Activated naive CD4-positive, alpha-beta T cell treated with anti-CD3 and anti-CD28 coated beads for 36 hours (primary cell): ENCODE measurements at regions of chr4 and their contacts with region 1.

Region 1: GRCh38 chr4:183504064-183504929 is 561 bp upstream of the ING2 start:
- DNase-seq: peak; percentile 98
- H3K4me3 Mint-ChIP-seq: peak overlapping the region; percentile 91
- H3K27ac Mint-ChIP-seq: peak overlapping the region; percentile 93
- H3K4me1 Mint-ChIP-seq: peaks cover 39% of the 10 kb centered on the region
- H3K27me3 Mint-ChIP-seq: no peaks in the 10 kb centered on the region

Region 2: DNA sequence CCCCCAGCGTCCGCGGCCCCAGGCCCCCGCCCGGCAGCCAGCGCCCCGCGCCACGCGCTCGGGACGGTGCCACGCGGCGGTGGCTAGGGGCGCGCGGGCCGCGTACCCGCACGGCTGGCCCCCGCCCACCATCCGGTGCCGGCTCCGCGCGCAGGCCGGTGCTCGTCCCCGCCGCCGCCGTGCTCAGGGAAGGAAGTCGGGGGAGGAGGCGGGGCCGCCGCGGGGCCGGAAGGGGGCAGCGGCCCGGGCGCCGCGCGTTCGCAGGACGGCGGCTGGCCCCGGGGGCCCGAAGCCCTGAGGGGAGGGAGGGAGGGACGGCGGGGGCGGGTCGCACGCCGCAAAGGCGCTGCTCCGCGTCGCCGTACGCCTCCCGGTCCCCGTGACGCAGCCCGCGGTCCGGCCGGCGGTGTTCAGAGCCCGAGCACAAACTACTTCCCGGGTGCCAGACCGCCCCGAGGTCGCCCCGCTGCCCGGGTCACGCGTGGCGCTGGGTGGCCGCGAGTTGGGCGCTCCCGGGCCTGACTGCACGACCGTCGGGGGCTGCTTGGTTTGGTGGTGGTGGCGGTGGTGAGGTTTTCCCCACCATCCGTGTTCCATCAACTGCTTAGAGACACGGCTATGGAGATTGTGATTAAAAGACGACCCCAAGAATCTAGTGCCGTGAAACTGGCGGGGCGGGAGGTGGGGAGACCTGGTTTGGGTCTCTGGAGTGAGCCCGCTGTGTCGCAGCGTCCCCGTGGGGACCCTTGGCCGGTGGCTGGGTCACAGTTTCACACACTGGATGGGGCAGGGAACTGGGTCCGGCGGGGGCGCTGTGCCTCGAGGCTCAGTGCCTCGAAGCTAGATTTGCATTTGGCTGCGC is 586.9 kb before region 1 on chr4 and contains the start of gene DCTD:
- CTCF ChIA-PET with region 1: no interaction called
- intact Hi-C with region 1: loop called (anchors 2 kb)
- DNase-seq: peak; percentile 83
- H3K4me3 Mint-ChIP-seq: peak within 1 kb of the TSS; percentile 86
- H3K27ac Mint-ChIP-seq: peak within 1 kb of the TSS; percentile 92
- H3K4me1 Mint-ChIP-seq: peaks cover 53% of the 10 kb centered on the region
- H3K27me3 Mint-ChIP-seq: no peaks in the 10 kb centered on the region
- total RNA-seq, gene DCTD: 137 to 152 TPM

Region 3: DNA sequence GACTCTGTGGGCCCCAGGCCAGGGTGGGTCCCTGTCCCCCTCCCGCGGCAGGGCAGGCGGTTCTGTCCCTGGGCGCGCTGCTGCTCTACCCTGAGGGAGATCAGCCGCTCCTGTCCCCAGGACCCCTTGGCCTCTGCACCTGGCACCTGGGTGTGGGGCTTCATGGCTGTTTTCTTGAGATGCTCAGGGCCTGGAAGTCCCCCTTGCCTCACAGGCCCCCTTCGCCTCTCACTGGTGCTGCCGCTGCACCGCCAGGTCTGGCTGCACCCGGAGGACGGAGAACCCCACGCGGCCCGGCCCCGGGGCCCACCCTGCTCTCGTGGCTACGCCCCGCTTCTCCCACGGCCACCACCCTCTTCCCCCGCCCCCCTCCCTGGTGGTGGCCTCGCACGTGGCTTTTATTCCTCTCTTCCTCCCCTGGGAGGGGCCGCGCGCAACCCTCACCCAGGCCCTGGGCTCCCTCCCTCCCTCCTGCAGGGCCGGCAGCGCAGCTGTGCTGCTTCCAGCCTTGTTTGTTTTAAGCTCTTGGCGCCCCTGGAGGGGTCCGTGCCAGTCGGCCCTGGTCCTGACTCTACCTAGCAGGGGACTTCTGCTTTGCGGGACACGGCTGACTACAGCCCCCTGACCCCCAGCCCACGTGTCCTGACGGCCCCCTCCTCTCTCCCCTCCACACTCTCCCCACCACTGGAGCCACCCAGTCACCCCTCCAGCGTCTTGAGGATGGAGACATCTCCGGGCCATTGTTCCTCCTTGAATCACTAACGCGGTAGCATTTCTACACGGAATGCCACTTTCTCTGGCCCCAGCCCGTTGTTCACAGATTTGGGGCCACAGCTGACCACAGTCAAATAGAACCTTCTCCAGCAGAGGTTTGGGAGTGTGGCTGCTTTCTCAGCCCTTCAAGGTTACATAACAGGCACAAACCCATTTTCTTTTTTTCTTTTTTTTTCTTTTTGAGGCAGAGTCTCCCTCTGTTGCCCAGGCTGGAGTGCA is 161.5 kb before region 1 on chr4:
- CTCF ChIA-PET with region 1: no interaction called
- intact Hi-C with region 1: loop called (anchors 5 kb)
- DNase-seq: peak; percentile 12
- H3K4me3 Mint-ChIP-seq: peak overlapping the region; percentile 42
- H3K27ac Mint-ChIP-seq: no peak overlapping the region
- H3K4me1 Mint-ChIP-seq: peaks cover 5% of the 10 kb centered on the region
- H3K27me3 Mint-ChIP-seq: peaks cover 20% of the 10 kb centered on the region

Region 4: GRCh38 chr4:183471946-183472708 is 32.2 kb before region 1 on chr4:
- CTCF ChIA-PET with region 1: interaction called, 3 read pairs
- intact Hi-C with region 1: loop called (anchors 1 kb)
- DNase-seq: peak; percentile 91
- H3K4me3 Mint-ChIP-seq: no peak overlapping the region
- H3K27ac Mint-ChIP-seq: no peak overlapping the region
- H3K4me1 Mint-ChIP-seq: no peaks in the 10 kb centered on the region
- H3K27me3 Mint-ChIP-seq: no peaks in the 10 kb centered on the region

Region 5: DNA sequence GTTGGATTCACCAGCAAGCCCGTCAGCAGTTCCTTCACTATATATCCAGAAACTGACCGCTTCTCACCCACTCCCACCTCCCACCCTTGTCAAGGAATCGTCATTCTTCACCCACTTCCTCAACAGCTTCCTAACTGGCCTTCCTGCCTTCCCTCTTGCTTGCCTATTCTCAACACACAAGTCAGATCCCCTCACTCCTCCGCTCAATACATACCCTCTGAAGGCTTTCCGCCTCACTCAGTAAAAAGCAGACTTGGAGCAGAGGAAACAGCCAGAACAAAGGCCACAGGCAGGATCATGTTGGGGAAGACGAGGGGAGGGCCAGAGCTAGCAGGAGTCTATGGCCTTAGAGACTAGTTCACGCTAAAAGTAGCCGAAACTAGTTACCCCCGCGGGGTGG is 131.0 kb after region 1 on chr4:
- CTCF ChIA-PET with region 1: no interaction called
- intact Hi-C with region 1: no loop called
- DNase-seq: no peak
- H3K4me3 Mint-ChIP-seq: no peak overlapping the region
- H3K27ac Mint-ChIP-seq: no peak overlapping the region
- H3K4me1 Mint-ChIP-seq: peaks cover 20% of the 10 kb centered on the region
- H3K27me3 Mint-ChIP-seq: peaks cover 2% of the 10 kb centered on the region

Region 6: GRCh38 chr4:183722731-183723560 is 218.6 kb after region 1 on chr4:
- CTCF ChIA-PET with region 1: no interaction called
- intact Hi-C with region 1: loop called (anchors 10 kb)
- DNase-seq: peak; percentile 53
- H3K4me3 Mint-ChIP-seq: peak overlapping the region; percentile 72
- H3K27ac Mint-ChIP-seq: no peak overlapping the region
- H3K4me1 Mint-ChIP-seq: peaks cover 9% of the 10 kb centered on the region
- H3K27me3 Mint-ChIP-seq: peaks cover 12% of the 10 kb centered on the region

Region 7: GRCh38 chr4:184575306-184575705 is 1071.0 kb after region 1 on chr4:
- CTCF ChIA-PET with region 1: no interaction called
- intact Hi-C with region 1: loop called (anchors 10 kb)
- DNase-seq: no peak
- H3K4me3 Mint-ChIP-seq: no peak overlapping the region
- H3K27ac Mint-ChIP-seq: no peak overlapping the region
- H3K4me1 Mint-ChIP-seq: peaks cover 13% of the 10 kb centered on the region
- H3K27me3 Mint-ChIP-seq: no peaks in the 10 kb centered on the region

Region 8: GRCh38 chr4:185203486-185204237 is 1699.4 kb after region 1 on chr4 and contains the start of gene CFAP97:
- CTCF ChIA-PET with region 1: no interaction called
- intact Hi-C with region 1: loop called (anchors 10 kb)
- DNase-seq: peak; percentile 73
- H3K4me3 Mint-ChIP-seq: peak within 1 kb of the TSS; percentile 96
- H3K27ac Mint-ChIP-seq: peak within 1 kb of the TSS; percentile 96
- H3K4me1 Mint-ChIP-seq: peaks cover 32% of the 10 kb centered on the region
- H3K27me3 Mint-ChIP-seq: no peaks in the 10 kb centered on the region
- total RNA-seq, gene CFAP97: 38.4 to 43.6 TPM